Common myeloid progenitor, CD34-positive (primary cell): ENCODE measurements at regions of chr19 and their contacts with region 1.

Region 1: GRCh38 chr19:41298348-41298964 is 11.5 kb upstream of the CCDC97 start:
- DNase-seq: peak; percentile 94 to 95 (median 94)
- H3K4me3 ChIP-seq: peak overlapping the region in 2 of 7 experiments; percentile 27 to 40
- H3K27ac ChIP-seq: peak overlapping the region; percentile 99
- H3K4me1 ChIP-seq: peaks cover 26 to 76% (median 58%) of the 10 kb centered on the region in 4 experiments
- H3K27me3 ChIP-seq: no peaks in the 10 kb centered on the region

Region 2: GRCh38 chr19:40981591-40981990 is 316.9 kb before region 1 on chr19:
- CTCF ChIA-PET with region 1: no interaction called
- POLR2A ChIA-PET with region 1: interaction called, 11 read pairs
- DNase-seq: no peak
- H3K4me3 ChIP-seq: no peak overlapping the region
- H3K27ac ChIP-seq: no peak overlapping the region
- H3K4me1 ChIP-seq: no peaks in the 10 kb centered on the region
- H3K27me3 ChIP-seq: peaks cover 0 to 22% (median 7%) of the 10 kb centered on the region in 5 experiments

Region 3: GRCh38 chr19:41192574-41193429 is 105.7 kb before region 1 on chr19 and contains the start of gene CYP2S1:
- CTCF ChIA-PET with region 1: no interaction called
- POLR2A ChIA-PET with region 1: no interaction called
- DNase-seq: peak in 2 of 3 donors; percentile 37 to 54
- H3K4me3 ChIP-seq: peak within 1 kb of the TSS in 6 of 7 experiments; percentile 10 to 70 (median 55)
- H3K27ac ChIP-seq: no peak within 1 kb of the TSS
- H3K4me1 ChIP-seq: peaks cover 4 to 31% (median 23%) of the 10 kb centered on the region in 4 experiments
- H3K27me3 ChIP-seq: peaks cover 0 to 27% (median 6%) of the 10 kb centered on the region in 5 experiments

Region 4: GRCh38 chr19:41206926-41207750 is 91.3 kb before region 1 on chr19:
- CTCF ChIA-PET with region 1: interaction called, 11 read pairs
- POLR2A ChIA-PET with region 1: no interaction called
- DNase-seq: no peak
- H3K4me3 ChIP-seq: no peak overlapping the region
- H3K27ac ChIP-seq: no peak overlapping the region
- H3K4me1 ChIP-seq: peaks cover 0 to 3% (median 0%) of the 10 kb centered on the region in 4 experiments
- H3K27me3 ChIP-seq: no peaks in the 10 kb centered on the region

Region 5: GRCh38 chr19:41263850-41264580 is 34.4 kb before region 1 on chr19 and contains the start of gene HNRNPUL1:
- CTCF ChIA-PET with region 1: interaction called, 12 read pairs
- POLR2A ChIA-PET with region 1: interaction called, 14 read pairs
- DNase-seq: peak; percentile 100
- H3K4me3 ChIP-seq: peak within 1 kb of the TSS; percentile 64 to 97 (median 90)
- H3K27ac ChIP-seq: peak within 1 kb of the TSS; percentile 95 to 99
- H3K4me1 ChIP-seq: peaks cover 9 to 37% (median 28%) of the 10 kb centered on the region in 4 experiments
- H3K27me3 ChIP-seq: no peaks in the 10 kb centered on the region

Region 6: GRCh38 chr19:41339936-41340335 is 41.5 kb after region 1 on chr19:
- CTCF ChIA-PET with region 1: no interaction called
- POLR2A ChIA-PET with region 1: no interaction called
- DNase-seq: no peak
- H3K4me3 ChIP-seq: no peak overlapping the region
- H3K27ac ChIP-seq: no peak overlapping the region
- H3K4me1 ChIP-seq: peaks cover 0 to 21% (median 15%) of the 10 kb centered on the region in 4 experiments
- H3K27me3 ChIP-seq: no peaks in the 10 kb centered on the region